Activated CD4-positive, alpha-beta memory T cell treated with anti-CD3 and anti-CD28 coated beads for 36 hours (primary cell): ENCODE measurements at regions of chr12 and their contacts with region 1.

Region 1: DNA sequence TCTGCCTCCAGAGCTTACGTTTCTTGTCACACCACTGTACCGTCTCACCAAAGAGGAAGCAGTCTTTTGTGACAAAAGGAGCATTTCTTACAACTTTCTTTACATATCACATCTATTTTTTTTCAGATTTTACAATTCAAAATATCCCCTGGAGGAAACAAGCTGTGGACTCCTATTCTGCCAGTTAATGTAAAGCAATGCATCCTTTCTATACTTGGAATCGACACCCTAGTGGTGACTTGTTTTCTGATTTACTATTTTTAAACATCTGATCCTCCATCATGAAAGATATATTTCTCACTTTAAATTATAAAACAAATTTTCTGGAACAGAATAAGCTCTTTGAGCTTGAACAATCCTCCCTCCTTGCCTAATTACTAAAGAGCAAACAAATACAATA is 34.8 kb downstream of the AICDA start:
- DNase-seq: no peak
- H3K4me3 Mint-ChIP-seq: no peak overlapping the region
- H3K27ac Mint-ChIP-seq: no peak overlapping the region
- H3K4me1 Mint-ChIP-seq: peaks cover 2% of the 10 kb centered on the region
- H3K27me3 Mint-ChIP-seq: peaks cover 2% of the 10 kb centered on the region

Region 2: GRCh38 chr12:8475508-8476203 is 102.2 kb before region 1 on chr12:
- CTCF ChIA-PET with region 1: no interaction called
- POLR2A ChIA-PET with region 1: no interaction called
- intact Hi-C with region 1: no loop called
- DNase-seq: no peak
- H3K4me3 Mint-ChIP-seq: no peak overlapping the region
- H3K27ac Mint-ChIP-seq: no peak overlapping the region
- H3K4me1 Mint-ChIP-seq: no peaks in the 10 kb centered on the region
- H3K27me3 Mint-ChIP-seq: peaks cover 14% of the 10 kb centered on the region

Region 3: DNA sequence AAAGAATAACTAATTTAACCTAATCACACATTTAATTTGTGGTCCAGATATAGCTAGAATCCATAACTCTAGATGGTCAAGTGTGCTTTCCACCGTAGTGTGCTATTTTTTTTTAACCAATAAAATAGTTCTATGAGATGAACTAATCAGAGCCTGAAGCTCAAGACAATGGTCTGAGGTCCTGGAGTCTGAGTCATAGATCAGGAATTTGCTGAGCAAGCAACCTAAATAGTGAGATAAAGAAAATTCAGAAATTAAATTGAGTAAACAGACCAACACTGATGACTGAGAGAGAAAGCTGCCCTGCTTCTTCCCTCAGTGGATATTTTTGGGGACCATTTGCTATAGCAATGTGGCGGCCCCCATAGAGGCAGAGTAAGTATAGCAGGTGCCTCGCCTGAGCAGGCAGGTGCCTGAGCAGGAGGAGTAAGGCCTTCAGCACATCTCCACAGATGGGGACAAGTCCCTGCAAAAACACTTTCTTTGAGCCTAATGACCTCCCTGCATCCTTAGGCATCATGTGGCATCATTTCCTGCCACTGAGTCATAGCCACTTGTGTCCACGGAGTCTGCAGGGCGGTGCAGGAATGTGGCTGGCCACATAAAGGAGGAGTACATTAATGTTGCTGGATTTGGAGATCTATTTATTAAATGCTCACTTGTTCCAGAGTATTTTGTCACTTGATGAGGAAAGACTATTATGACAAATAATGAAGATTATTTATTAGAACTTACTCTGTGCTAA is 23.3 kb before region 1 on chr12:
- CTCF ChIA-PET with region 1: no interaction called
- POLR2A ChIA-PET with region 1: no interaction called
- intact Hi-C with region 1: loop called (anchors 2 kb)
- DNase-seq: no peak
- H3K4me3 Mint-ChIP-seq: no peak overlapping the region
- H3K27ac Mint-ChIP-seq: no peak overlapping the region
- H3K4me1 Mint-ChIP-seq: peaks cover 4% of the 10 kb centered on the region
- H3K27me3 Mint-ChIP-seq: no peaks in the 10 kb centered on the region

Region 4: GRCh38 chr12:8681041-8681902 is 103.4 kb after region 1 on chr12:
- CTCF ChIA-PET with region 1: no interaction called
- POLR2A ChIA-PET with region 1: no interaction called
- intact Hi-C with region 1: no loop called
- DNase-seq: no peak
- H3K4me3 Mint-ChIP-seq: no peak overlapping the region
- H3K27ac Mint-ChIP-seq: no peak overlapping the region
- H3K4me1 Mint-ChIP-seq: peaks cover 2% of the 10 kb centered on the region
- H3K27me3 Mint-ChIP-seq: peaks cover 5% of the 10 kb centered on the region